GM10248 (cell line): ENCODE measurements at regions of chr2 and their contacts with region 1.

Region 1: GRCh38 chr2:37925063-37925897 is at the start of gene RMDN2:
- DNase-seq: peak; percentile 89
- CTCF ChIP-seq: peak; percentile 8

Region 2: GRCh38 chr2:37896314-37896713 is 29.0 kb before region 1 on chr2:
- CTCF ChIA-PET with region 1: interaction called, 19 read pairs
- POLR2A ChIA-PET with region 1: no interaction called
- DNase-seq: no peak
- CTCF ChIP-seq: peak; percentile 22